ENCODE measurements at regions of chr14 and their contacts with region 1.

Region 1: GRCh38 chr14:101992708-101993107 is 28.3 kb downstream of the DYNC1H1 start:
- DNase-seq: no peak
- ATAC-seq: peak in 7 of 8 donors; percentile 29 to 86 (median 73)
- H3K4me3 ChIP-seq: no peak overlapping the region
- H3K27ac ChIP-seq: no peak overlapping the region
- H3K4me1 ChIP-seq: peaks cover 0 to 7% (median 0%) of the 10 kb centered on the region in 9 donors
- H3K27me3 ChIP-seq: no peaks in the 10 kb centered on the region
- CTCF ChIP-seq: no peak

Region 2: GRCh38 chr14:100965296-100965695 is 1027.4 kb before region 1 on chr14:
- intact Hi-C with region 1: no loop called
- DNase-seq: no peak
- ATAC-seq: no peak
- H3K4me3 ChIP-seq: no peak overlapping the region
- H3K27ac ChIP-seq: no peak overlapping the region
- H3K4me1 ChIP-seq: no peaks in the 10 kb centered on the region
- H3K27me3 ChIP-seq: no peaks in the 10 kb centered on the region
- CTCF ChIP-seq: no peak

Region 3: DNA sequence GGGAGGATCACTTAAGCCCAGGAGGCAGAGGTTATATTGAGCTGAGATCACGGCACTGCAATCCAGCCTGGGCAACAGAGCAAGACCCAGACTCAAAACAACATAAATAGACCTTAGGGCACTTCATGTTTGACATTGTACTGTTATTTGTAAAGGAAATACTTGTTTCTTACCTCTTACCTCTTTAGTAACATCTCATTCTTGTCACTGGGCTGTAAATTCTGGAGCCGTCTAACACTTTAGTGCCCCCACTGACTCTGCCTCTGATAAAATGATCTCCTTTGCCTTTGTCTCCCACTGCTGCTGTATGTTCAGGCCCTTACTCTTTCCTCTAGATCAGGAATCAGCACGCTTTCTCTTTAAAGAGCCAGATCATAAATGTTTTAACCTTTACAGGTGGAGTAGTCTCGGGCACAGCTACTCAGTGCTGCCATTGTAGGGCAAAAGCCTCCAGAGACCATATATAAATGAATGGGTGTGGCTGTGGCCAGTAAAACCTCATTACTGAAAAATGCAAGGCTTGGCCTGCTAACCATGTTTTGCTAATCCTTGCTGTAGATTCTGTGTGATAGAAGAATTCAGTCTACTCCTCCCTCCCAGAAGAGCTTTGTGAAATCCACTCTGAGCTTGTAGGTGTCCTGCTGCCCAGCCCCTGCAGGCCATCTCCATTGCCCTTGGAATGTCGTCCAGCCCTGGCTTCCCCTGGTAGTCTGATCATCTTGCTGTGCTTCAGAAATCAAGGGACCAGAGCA is 35.9 kb after region 1 on chr14:
- intact Hi-C with region 1: loop called in 2 of 10 experiments (anchors 5 kb)
- DNase-seq: no peak
- ATAC-seq: no peak
- H3K4me3 ChIP-seq: no peak overlapping the region
- H3K27ac ChIP-seq: no peak overlapping the region
- H3K4me1 ChIP-seq: no peaks in the 10 kb centered on the region
- H3K27me3 ChIP-seq: no peaks in the 10 kb centered on the region
- CTCF ChIP-seq: no peak

Region 4: GRCh38 chr14:102096214-102097114 is 103.8 kb after region 1 on chr14:
- intact Hi-C with region 1: no loop called
- DNase-seq: peak; percentile 83 to 87
- ATAC-seq: peak; percentile 68 to 95 (median 90)
- H3K4me3 ChIP-seq: no peak overlapping the region
- H3K27ac ChIP-seq: no peak overlapping the region
- H3K4me1 ChIP-seq: peaks cover 0 to 10% (median 4%) of the 10 kb centered on the region in 9 donors
- H3K27me3 ChIP-seq: no peaks in the 10 kb centered on the region
- CTCF ChIP-seq: peak; percentile 75 to 90 (median 88)

Region 5: GRCh38 chr14:102316743-102317563 is 324.2 kb after region 1 on chr14:
- intact Hi-C with region 1: no loop called
- DNase-seq: peak; percentile 92 to 94
- ATAC-seq: peak; percentile 78 to 89 (median 83)
- H3K4me3 ChIP-seq: peak overlapping the region; percentile 29 to 76 (median 60)
- H3K27ac ChIP-seq: peak overlapping the region; percentile 30 to 98 (median 92)
- H3K4me1 ChIP-seq: peaks cover 0 to 61% (median 51%) of the 10 kb centered on the region in 9 donors
- H3K27me3 ChIP-seq: no peaks in the 10 kb centered on the region
- CTCF ChIP-seq: peak; percentile 57 to 93 (median 87)